ENCODE measurements at regions of chr4 and their contacts with region 1.

Region 1: DNA sequence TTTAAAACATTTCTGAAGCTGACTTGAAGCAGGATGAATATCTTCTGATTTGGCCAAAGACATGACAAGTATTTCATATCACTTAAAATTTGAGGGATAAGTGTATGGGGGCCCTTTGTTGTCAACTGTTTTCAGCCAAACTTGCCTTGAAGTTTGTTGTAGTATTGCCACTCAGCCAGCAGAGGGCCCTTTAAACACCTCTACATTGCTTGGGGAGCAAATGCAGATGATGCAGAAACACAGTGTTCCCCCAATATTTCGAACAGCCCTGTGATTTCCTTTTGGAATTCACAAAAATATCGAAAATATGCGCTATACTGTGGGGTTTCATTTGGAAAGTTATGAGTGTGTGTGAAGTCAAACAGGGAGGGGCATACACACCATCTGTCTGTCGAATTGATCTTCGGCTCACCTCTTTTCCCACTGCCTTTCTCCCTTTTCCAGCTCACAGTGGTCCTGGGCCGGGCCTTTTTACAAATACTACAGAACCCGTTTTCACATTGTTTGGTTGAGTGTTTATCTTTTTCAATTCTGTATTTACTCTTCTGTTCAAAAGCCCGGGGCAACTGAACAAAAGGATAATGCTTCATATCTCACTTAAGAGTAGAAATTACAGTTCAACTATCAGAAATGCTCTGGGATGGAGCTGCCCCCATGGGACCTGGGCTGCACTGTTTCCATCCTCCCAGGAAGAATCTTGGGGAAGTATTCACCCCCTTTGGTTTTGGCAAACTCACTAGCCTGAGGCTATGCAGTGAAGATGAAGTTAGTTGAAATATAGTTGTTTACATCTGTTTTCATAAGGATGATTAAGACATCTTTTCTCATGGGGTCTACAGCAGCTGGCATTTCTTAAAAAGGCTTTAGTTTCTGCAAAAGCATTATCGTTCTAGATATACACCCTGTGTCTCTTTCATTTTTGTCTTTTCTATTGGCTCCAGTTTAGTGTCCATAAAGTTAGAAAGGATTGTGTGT is 137.6 kb downstream of the EGF start:
- DNase-seq: peak; percentile 8
- ATAC-seq: peak; percentile 82
- H3K4me3 ChIP-seq: no peak overlapping the region
- H3K27ac ChIP-seq: no peak overlapping the region
- H3K4me1 ChIP-seq: peaks cover 6% of the 10 kb centered on the region
- H3K27me3 ChIP-seq: no peaks in the 10 kb centered on the region
- CTCF ChIP-seq: peak; percentile 79 to 84 (median 82)
- EP300 ChIP-seq: no peak
- POLR2A ChIP-seq: no peak
- RAD21 ChIP-seq: peak; percentile 93

Region 2: DNA sequence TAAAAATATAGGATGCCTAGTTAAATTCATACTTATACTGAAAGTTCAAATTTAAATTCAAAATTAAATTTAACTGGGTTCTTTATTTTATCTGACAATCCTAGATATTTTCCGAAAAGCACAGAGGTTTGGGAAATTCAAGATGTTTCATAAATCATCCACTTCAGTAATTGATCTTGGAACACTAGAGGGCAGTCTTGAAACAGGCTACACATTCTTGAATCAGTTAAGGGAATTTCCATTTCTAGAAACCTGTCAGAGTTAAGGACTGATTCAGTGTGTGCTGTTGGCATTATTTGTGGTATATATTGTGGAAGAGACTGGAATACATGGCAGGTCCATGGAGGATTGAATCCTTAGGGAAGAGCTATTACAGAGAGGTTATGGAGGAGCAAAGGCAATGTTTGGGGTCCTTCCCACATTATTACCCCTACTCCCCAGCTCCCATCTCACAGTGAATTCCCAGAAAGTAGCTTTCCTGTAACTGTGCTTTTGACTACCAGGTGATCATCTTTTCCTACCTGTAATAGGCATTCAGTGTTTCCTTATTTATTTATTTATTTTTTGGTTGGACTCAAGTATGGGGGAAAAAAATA is 44.7 kb before region 1 on chr4:
- CTCF ChIA-PET with region 1: interaction called, 35 read pairs
- POLR2A ChIA-PET with region 1: no interaction called
- RAD21 ChIA-PET with region 1: interaction called, 4 read pairs
- SMC1A ChIA-PET with region 1: interaction called, 56 read pairs
- in situ Hi-C with region 1: no loop called
- intact Hi-C with region 1: no loop called
- DNase-seq: peak; percentile 43
- ATAC-seq: peak; percentile 91
- H3K4me3 ChIP-seq: no peak overlapping the region
- H3K27ac ChIP-seq: no peak overlapping the region
- H3K4me1 ChIP-seq: peaks cover 4% of the 10 kb centered on the region; the same call in 1 of the 2 replicates
- H3K27me3 ChIP-seq: no peaks in the 10 kb centered on the region
- CTCF ChIP-seq: peak; percentile 58 to 91 (median 62); a peak in 4 of 6 replicates
- EP300 ChIP-seq: no peak
- POLR2A ChIP-seq: no peak
- RAD21 ChIP-seq: peak; percentile 98

Region 3: DNA sequence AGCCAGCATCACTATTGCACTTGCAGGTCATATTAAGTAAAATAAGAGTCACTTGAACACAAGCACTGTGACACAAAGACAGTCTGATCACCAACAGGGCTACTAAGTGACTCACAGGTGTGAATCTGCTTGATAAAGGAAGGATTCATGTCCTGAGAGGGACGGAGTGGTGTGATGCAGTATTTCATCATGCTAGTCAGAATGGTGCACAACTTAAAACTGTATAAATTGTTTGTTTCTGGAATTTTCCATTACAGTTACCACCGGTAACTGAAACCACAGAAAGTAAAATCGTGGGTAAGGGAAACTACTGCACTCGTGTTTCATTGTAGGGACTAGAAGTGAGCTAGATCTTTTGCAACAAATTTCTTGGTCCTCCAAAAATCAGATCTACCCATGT is 38.4 kb after region 1 on chr4:
- CTCF ChIA-PET with region 1: interaction called, 11 read pairs
- POLR2A ChIA-PET with region 1: interaction called, 3 read pairs
- RAD21 ChIA-PET with region 1: interaction called, 6 read pairs
- SMC1A ChIA-PET with region 1: interaction called, 12 read pairs
- in situ Hi-C with region 1: no loop called
- intact Hi-C with region 1: no loop called
- DNase-seq: peak; percentile 23
- ATAC-seq: peak; percentile 90
- H3K4me3 ChIP-seq: no peak overlapping the region
- H3K27ac ChIP-seq: no peak overlapping the region
- H3K4me1 ChIP-seq: no peaks in the 10 kb centered on the region
- H3K27me3 ChIP-seq: no peaks in the 10 kb centered on the region
- CTCF ChIP-seq: no peak
- EP300 ChIP-seq: no peak
- POLR2A ChIP-seq: no peak
- RAD21 ChIP-seq: no peak

Region 4: GRCh38 chr4:110184140-110184790 is 134.0 kb after region 1 on chr4:
- CTCF ChIA-PET with region 1: interaction called, 17 read pairs
- POLR2A ChIA-PET with region 1: interaction called, 3 read pairs
- RAD21 ChIA-PET with region 1: interaction called, 7 read pairs
- SMC1A ChIA-PET with region 1: interaction called, 14 read pairs
- in situ Hi-C with region 1: no loop called
- intact Hi-C with region 1: no loop called
- DNase-seq: no peak
- ATAC-seq: peak; percentile 58
- H3K4me3 ChIP-seq: no peak overlapping the region
- H3K27ac ChIP-seq: no peak overlapping the region
- H3K4me1 ChIP-seq: peaks cover 7% of the 10 kb centered on the region; the same call in 1 of the 2 replicates
- H3K27me3 ChIP-seq: no peaks in the 10 kb centered on the region
- CTCF ChIP-seq: no peak
- EP300 ChIP-seq: no peak
- POLR2A ChIP-seq: no peak
- RAD21 ChIP-seq: no peak

Region 5: GRCh38 chr4:110211007-110211769 is 160.9 kb after region 1 on chr4:
- CTCF ChIA-PET with region 1: interaction called, 56 read pairs
- POLR2A ChIA-PET with region 1: no interaction called
- RAD21 ChIA-PET with region 1: interaction called, 5 read pairs
- SMC1A ChIA-PET with region 1: interaction called, 35 read pairs
- in situ Hi-C with region 1: loop called (anchors 5 kb)
- intact Hi-C with region 1: loop called (anchors 1 kb)
- DNase-seq: no peak
- ATAC-seq: peak; percentile 94
- H3K4me3 ChIP-seq: no peak overlapping the region
- H3K27ac ChIP-seq: no peak overlapping the region
- H3K4me1 ChIP-seq: no peaks in the 10 kb centered on the region
- H3K27me3 ChIP-seq: no peaks in the 10 kb centered on the region
- CTCF ChIP-seq: peak; percentile 71 to 80 (median 75)
- EP300 ChIP-seq: no peak
- POLR2A ChIP-seq: no peak
- RAD21 ChIP-seq: peak; percentile 86

Region 6: DNA sequence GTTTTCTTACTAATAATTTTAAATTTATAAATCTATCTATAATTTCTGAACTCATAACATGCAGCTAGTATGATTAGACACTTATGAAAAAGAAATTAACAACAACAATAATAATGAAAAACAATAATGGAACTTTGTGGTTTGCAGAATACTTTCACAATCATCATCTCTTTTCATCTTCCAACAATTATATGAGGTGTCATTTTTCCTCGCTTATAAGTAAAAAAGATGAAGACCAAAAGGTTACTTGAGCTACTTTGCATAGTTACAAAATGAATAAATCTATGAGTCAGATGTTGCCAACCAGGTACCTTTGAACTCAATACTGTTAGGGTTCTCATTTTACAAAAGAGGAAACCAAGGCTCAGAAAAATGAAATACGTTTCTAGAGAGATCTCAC is 246.7 kb after region 1 on chr4:
- CTCF ChIA-PET with region 1: interaction called, 13 read pairs
- POLR2A ChIA-PET with region 1: no interaction called
- RAD21 ChIA-PET with region 1: no interaction called
- SMC1A ChIA-PET with region 1: interaction called, 5 read pairs
- in situ Hi-C with region 1: no loop called
- intact Hi-C with region 1: loop called (anchors 5 kb)
- DNase-seq: peak; percentile 38
- ATAC-seq: peak; percentile 97
- H3K4me3 ChIP-seq: no peak overlapping the region
- H3K27ac ChIP-seq: no peak overlapping the region
- H3K4me1 ChIP-seq: peaks cover 9% of the 10 kb centered on the region
- H3K27me3 ChIP-seq: peaks cover 0 to 4% of the 10 kb centered on the region in 2 experiments; a peak in 1 of 4 replicates
- CTCF ChIP-seq: no peak
- EP300 ChIP-seq: peak; percentile 54 to 75; a peak in 3 of 4 replicates
- POLR2A ChIP-seq: no peak
- RAD21 ChIP-seq: no peak

Region 7: DNA sequence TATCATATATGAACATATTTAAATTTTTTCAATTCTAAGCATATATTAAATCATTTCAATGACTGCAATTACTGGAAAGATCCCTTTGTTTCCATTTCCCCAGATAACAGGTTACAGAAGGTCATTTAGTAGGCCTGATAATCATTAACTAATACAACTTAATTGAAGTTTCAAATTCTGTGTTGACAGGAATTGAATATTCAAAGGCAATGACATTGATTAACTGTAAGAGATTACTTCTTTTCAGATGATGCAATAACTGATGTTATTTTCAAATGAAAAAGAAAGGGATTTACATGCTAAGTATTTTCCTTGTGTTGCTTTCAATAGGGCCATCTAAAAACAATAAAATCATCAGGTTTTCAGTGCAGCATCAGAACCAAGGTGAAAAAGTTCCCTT is 344.6 kb after region 1 on chr4:
- CTCF ChIA-PET with region 1: no interaction called
- POLR2A ChIA-PET with region 1: no interaction called
- RAD21 ChIA-PET with region 1: no interaction called
- SMC1A ChIA-PET with region 1: no interaction called
- in situ Hi-C with region 1: no loop called
- intact Hi-C with region 1: no loop called
- DNase-seq: no peak
- ATAC-seq: no peak
- H3K4me3 ChIP-seq: no peak overlapping the region
- H3K27ac ChIP-seq: no peak overlapping the region
- H3K4me1 ChIP-seq: no peaks in the 10 kb centered on the region
- H3K27me3 ChIP-seq: no peaks in the 10 kb centered on the region
- CTCF ChIP-seq: no peak
- EP300 ChIP-seq: no peak
- POLR2A ChIP-seq: no peak
- RAD21 ChIP-seq: no peak

Region 8: GRCh38 chr4:110516106-110516922 is 466.1 kb after region 1 on chr4:
- CTCF ChIA-PET with region 1: interaction called, 132 read pairs
- POLR2A ChIA-PET with region 1: no interaction called
- RAD21 ChIA-PET with region 1: interaction called, 30 read pairs
- SMC1A ChIA-PET with region 1: interaction called, 14 read pairs
- in situ Hi-C with region 1: no loop called
- intact Hi-C with region 1: loop called (anchors 2 kb)
- DNase-seq: peak; percentile 30
- ATAC-seq: peak; percentile 94
- H3K4me3 ChIP-seq: peak overlapping the region; percentile 64; the same call in 1 of the 2 replicates
- H3K27ac ChIP-seq: no peak overlapping the region; the same call in 1 of the 2 replicates
- H3K4me1 ChIP-seq: no peaks in the 10 kb centered on the region
- H3K27me3 ChIP-seq: no peaks in the 10 kb centered on the region
- CTCF ChIP-seq: peak; percentile 76 to 82 (median 82)
- EP300 ChIP-seq: no peak
- POLR2A ChIP-seq: no peak
- RAD21 ChIP-seq: peak; percentile 54

Measured in GM12878 (cell line).